T-cell (primary cell): ENCODE measurements at regions of chr15 and their contacts with region 1.

Region 1: GRCh38 chr15:70047386-70048197 is 50.1 kb downstream of the TLE3 start:
- DNase-seq: no peak
- ATAC-seq: no peak
- H3K4me3 ChIP-seq: no peak overlapping the region
- H3K4me3 Mint-ChIP-seq: no peak overlapping the region
- H3K27ac ChIP-seq: no peak overlapping the region
- H3K27ac Mint-ChIP-seq: no peak overlapping the region
- H3K4me1 ChIP-seq: no peaks in the 10 kb centered on the region
- H3K4me1 Mint-ChIP-seq: peaks cover 0 to 5% (median 0%) of the 10 kb centered on the region in 3 donors
- H3K27me3 ChIP-seq: no peaks in the 10 kb centered on the region
- H3K27me3 Mint-ChIP-seq: no peaks in the 10 kb centered on the region

Region 2: GRCh38 chr15:69185706-69186105 is 861.9 kb before region 1 on chr15:
- CTCF ChIA-PET with region 1: no interaction called
- POLR2A ChIA-PET with region 1: no interaction called
- DNase-seq: peak in 1 of 35 experiments; percentile 3
- ATAC-seq: no peak
- H3K4me3 ChIP-seq: no peak overlapping the region
- H3K4me3 Mint-ChIP-seq: no peak overlapping the region
- H3K27ac ChIP-seq: no peak overlapping the region
- H3K27ac Mint-ChIP-seq: no peak overlapping the region
- H3K4me1 ChIP-seq: no peaks in the 10 kb centered on the region
- H3K4me1 Mint-ChIP-seq: no peaks in the 10 kb centered on the region
- H3K27me3 ChIP-seq: no peaks in the 10 kb centered on the region
- H3K27me3 Mint-ChIP-seq: no peaks in the 10 kb centered on the region

Region 3: DNA sequence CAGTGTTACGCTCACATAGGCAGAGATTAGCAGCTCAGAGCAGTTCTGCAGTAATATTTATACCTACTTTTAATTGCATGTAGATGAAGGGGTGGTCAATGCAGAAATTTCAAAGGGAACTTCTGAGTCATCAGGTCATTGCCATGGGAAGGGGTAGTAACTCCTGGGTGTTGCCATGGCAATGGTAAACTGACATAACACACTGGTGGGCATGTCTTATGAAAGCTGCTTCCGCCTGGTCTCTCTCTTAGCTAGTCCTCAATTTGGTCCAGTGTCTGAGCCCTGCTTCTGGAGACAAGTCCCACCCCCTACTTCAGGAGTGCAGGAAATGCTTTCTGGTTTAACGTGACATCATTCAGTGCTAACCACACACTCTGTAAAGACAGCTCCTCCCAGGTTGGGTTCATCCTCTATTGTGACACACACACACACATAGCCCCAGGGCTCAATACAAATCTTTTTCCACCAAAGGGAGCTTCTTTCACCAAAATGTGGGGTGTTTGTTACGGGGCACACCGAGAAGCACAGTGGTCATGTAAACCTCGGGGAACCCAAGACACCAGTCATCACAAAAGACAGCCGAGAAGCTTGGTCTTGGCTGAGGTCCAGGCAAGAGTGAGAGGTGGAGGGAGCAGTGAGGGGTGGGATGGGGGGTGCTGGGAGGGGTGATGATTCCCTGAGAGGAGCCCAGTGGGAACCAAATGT is 24.4 kb before region 1 on chr15:
- CTCF ChIA-PET with region 1: no interaction called
- POLR2A ChIA-PET with region 1: interaction called in 1 of 2 experiments, 10 read pairs
- DNase-seq: peak in 34 of 35 experiments; percentile 6 to 87 (median 48)
- ATAC-seq: peak; percentile 91 to 99 (median 99)
- H3K4me3 ChIP-seq: no peak overlapping the region
- H3K4me3 Mint-ChIP-seq: peak overlapping the region in 1 of 3 donors; percentile 29
- H3K27ac ChIP-seq: peak overlapping the region; percentile 44
- H3K27ac Mint-ChIP-seq: peak overlapping the region in 1 of 2 donors; percentile 79
- H3K4me1 ChIP-seq: peaks cover 2 to 22% of the 10 kb centered on the region in 2 experiments
- H3K4me1 Mint-ChIP-seq: peaks cover 15 to 27% (median 22%) of the 10 kb centered on the region in 3 donors
- H3K27me3 ChIP-seq: peaks cover 0 to 22% of the 10 kb centered on the region in 2 experiments
- H3K27me3 Mint-ChIP-seq: peaks cover 0 to 4% of the 10 kb centered on the region in 2 donors